ENCODE measurements at regions of chrX and their contacts with region 1.

Region 1: DNA sequence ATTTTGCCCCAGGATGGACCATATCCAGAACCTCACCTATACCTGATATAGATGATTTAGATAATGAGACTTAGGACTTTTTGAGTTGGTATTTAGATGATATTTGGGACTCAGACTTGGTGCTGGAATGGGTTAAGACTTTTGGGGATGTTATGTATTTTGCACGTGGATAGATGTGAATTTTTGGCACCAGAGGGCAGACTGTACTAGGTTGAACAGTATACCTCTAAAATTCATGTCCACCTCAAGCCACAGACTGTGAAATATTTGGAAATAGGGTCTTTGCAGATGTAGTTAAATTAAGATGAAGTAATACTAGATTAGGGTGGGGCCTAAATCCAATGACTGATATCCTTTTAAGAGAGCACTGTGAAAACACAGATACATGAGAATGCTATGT is 15.6 kb downstream of the RBM41 start:
- DNase-seq: peak; percentile 32
- H3K4me3 Mint-ChIP-seq: no peak overlapping the region
- H3K27ac Mint-ChIP-seq: no peak overlapping the region
- H3K4me1 Mint-ChIP-seq: no peaks in the 10 kb centered on the region
- H3K27me3 Mint-ChIP-seq: peaks cover 37% of the 10 kb centered on the region
- CTCF ChIP-seq: peak; percentile 21

Region 2: DNA sequence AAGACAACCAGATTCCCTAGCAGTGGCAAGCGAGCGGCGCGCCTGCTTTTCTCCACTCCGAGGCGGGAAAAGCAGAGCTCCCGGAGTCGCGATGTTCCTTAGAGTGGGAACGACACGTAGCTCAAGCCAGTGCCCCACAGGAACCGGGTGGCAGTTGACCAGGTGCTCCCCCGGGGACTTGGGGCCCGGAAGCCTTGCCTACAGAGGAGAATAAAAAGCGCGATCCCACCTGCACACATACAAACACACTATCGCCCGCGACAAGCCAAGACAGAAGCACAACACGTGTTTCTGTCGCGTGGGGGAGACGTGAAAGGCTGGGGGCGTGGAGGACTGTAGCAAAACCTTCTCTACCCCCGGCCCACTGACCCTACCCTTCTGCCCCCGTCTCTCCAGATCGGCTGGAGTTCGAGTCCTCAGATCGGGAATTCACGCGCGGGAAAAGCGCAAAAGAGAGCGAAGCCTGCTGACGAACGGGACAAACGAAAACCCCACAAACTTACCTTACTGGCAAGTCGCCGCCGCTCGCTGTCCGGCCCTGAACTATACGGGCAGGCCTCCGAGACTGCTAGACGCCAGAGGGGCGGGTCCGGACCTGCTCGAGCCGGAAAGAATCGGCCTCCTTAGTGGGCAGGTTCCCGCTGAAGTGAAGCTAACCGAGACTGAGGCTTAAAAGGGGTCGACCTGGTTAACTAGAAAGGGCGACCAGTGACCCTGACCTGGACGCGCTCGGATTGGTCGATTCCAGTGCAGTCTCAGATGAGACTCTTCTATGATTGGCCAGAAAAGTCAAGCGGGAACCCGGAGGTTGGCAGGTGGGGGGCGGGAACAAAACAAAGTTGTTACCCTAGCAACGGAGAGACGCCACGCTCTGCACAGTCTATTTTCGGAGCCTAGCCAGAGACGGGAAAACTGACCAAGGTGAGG is 103.1 kb after region 1 on chrX and contains the starts of genes DNAAF6 and NUP62CL:
- CTCF ChIA-PET with region 1: no interaction called
- POLR2A ChIA-PET with region 1: no interaction called
- intact Hi-C with region 1: loop called (anchors 5 kb)
- DNase-seq: peak; percentile 75
- H3K4me3 Mint-ChIP-seq: peak within 1 kb of the TSS; percentile 84
- H3K27ac Mint-ChIP-seq: peak within 1 kb of the TSS; percentile 70
- H3K4me1 Mint-ChIP-seq: no peaks in the 10 kb centered on the region
- H3K27me3 Mint-ChIP-seq: peaks cover 11% of the 10 kb centered on the region
- CTCF ChIP-seq: no peak
- total RNA-seq, gene DNAAF6: not detected in 2 replicates
- total RNA-seq, gene NUP62CL: 4.8 and 7.3 TPM in 2 replicates

Region 3: GRCh38 chrX:107429090-107429489 is 326.1 kb after region 1 on chrX:
- CTCF ChIA-PET with region 1: no interaction called
- POLR2A ChIA-PET with region 1: no interaction called
- intact Hi-C with region 1: loop called (anchors 1 kb)
- DNase-seq: peak; percentile 62
- H3K4me3 Mint-ChIP-seq: no peak overlapping the region
- H3K27ac Mint-ChIP-seq: no peak overlapping the region
- H3K4me1 Mint-ChIP-seq: no peaks in the 10 kb centered on the region
- H3K27me3 Mint-ChIP-seq: peaks cover 62% of the 10 kb centered on the region
- CTCF ChIP-seq: peak; percentile 37